Caco-2 (cell line): ENCODE measurements at regions of chr7 and their contacts with region 1.

Region 1: GRCh38 chr7:84025332-84025927 is 169.2 kb downstream of the SEMA3A start:
- DNase-seq: peak; percentile 75 to 86
- H3K4me3 ChIP-seq: no peak overlapping the region
- H3K4me3 Mint-ChIP-seq: no peak overlapping the region
- H3K27ac Mint-ChIP-seq: peak overlapping the region; percentile 84
- H3K4me1 ChIP-seq: peaks cover 70% of the 10 kb centered on the region
- H3K4me1 Mint-ChIP-seq: peaks cover 31% of the 10 kb centered on the region
- H3K27me3 ChIP-seq: no peaks in the 10 kb centered on the region
- H3K27me3 Mint-ChIP-seq: no peaks in the 10 kb centered on the region
- CTCF ChIP-seq: no peak

Region 2: GRCh38 chr7:83934118-83934734 is 91.2 kb before region 1 on chr7:
- CTCF ChIA-PET with region 1: no interaction called
- POLR2A ChIA-PET with region 1: no interaction called
- intact Hi-C with region 1: no loop called
- DNase-seq: no peak
- H3K4me3 ChIP-seq: no peak overlapping the region
- H3K4me3 Mint-ChIP-seq: no peak overlapping the region
- H3K27ac Mint-ChIP-seq: no peak overlapping the region
- H3K4me1 ChIP-seq: 0 out of 2 replicates have a peak, but pooled peaks cover 4% of the 10 kb centered on the region
- H3K4me1 Mint-ChIP-seq: peaks cover 10% of the 10 kb centered on the region
- H3K27me3 ChIP-seq: no peaks in the 10 kb centered on the region
- H3K27me3 Mint-ChIP-seq: no peaks in the 10 kb centered on the region
- CTCF ChIP-seq: no peak

Region 3: DNA sequence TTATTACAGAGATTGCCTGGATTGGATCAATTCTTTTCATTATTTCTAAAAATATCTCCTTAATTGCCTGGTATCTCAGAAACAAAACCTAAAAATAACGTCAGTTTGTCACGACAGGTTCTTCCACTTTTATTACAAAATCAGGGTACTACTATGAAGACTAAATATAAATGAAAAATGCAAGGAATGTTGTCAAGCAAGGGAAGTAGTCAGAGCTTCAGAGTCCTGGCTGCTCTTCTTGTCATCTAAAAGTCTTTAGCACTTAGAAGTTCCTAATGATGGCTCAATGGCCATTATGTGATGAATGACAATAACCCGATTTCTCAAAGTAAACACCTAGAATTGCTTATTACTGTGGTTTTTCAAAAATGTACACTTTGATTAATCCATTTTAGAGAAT is 23.1 kb before region 1 on chr7:
- CTCF ChIA-PET with region 1: no interaction called
- POLR2A ChIA-PET with region 1: no interaction called
- intact Hi-C with region 1: loop called (anchors 1 kb)
- DNase-seq: peak in 1 of 2 experiments; percentile 24
- H3K4me3 ChIP-seq: no peak overlapping the region
- H3K4me3 Mint-ChIP-seq: no peak overlapping the region
- H3K27ac Mint-ChIP-seq: no peak overlapping the region
- H3K4me1 ChIP-seq: peaks cover 18% of the 10 kb centered on the region
- H3K4me1 Mint-ChIP-seq: peaks cover 6% of the 10 kb centered on the region
- H3K27me3 ChIP-seq: no peaks in the 10 kb centered on the region
- H3K27me3 Mint-ChIP-seq: no peaks in the 10 kb centered on the region
- CTCF ChIP-seq: no peak

Region 4: GRCh38 chr7:84073186-84073875 is 47.9 kb after region 1 on chr7:
- CTCF ChIA-PET with region 1: no interaction called
- POLR2A ChIA-PET with region 1: no interaction called
- intact Hi-C with region 1: loop called (anchors 1 kb)
- DNase-seq: peak in 1 of 2 experiments; percentile 38
- H3K4me3 ChIP-seq: no peak overlapping the region
- H3K4me3 Mint-ChIP-seq: no peak overlapping the region
- H3K27ac Mint-ChIP-seq: peak overlapping the region; percentile 25
- H3K4me1 ChIP-seq: peaks cover 45% of the 10 kb centered on the region
- H3K4me1 Mint-ChIP-seq: peaks cover 23% of the 10 kb centered on the region
- H3K27me3 ChIP-seq: no peaks in the 10 kb centered on the region
- H3K27me3 Mint-ChIP-seq: no peaks in the 10 kb centered on the region
- CTCF ChIP-seq: no peak

Region 5: GRCh38 chr7:84142726-84143125 is 117.3 kb after region 1 on chr7:
- CTCF ChIA-PET with region 1: no interaction called
- POLR2A ChIA-PET with region 1: no interaction called
- intact Hi-C with region 1: loop called (anchors 1 kb)
- DNase-seq: no peak
- H3K4me3 ChIP-seq: no peak overlapping the region
- H3K4me3 Mint-ChIP-seq: peak overlapping the region; percentile 20
- H3K27ac Mint-ChIP-seq: peak overlapping the region; percentile 34
- H3K4me1 ChIP-seq: peaks cover 62% of the 10 kb centered on the region
- H3K4me1 Mint-ChIP-seq: peaks cover 50% of the 10 kb centered on the region
- H3K27me3 ChIP-seq: no peaks in the 10 kb centered on the region
- H3K27me3 Mint-ChIP-seq: no peaks in the 10 kb centered on the region
- CTCF ChIP-seq: no peak

Region 6: GRCh38 chr7:84188786-84189405 is 163.5 kb after region 1 on chr7:
- CTCF ChIA-PET with region 1: no interaction called
- POLR2A ChIA-PET with region 1: no interaction called
- intact Hi-C with region 1: loop called (anchors 2 kb)
- DNase-seq: peak in 1 of 2 experiments; percentile 13
- H3K4me3 ChIP-seq: no peak overlapping the region
- H3K4me3 Mint-ChIP-seq: no peak overlapping the region
- H3K27ac Mint-ChIP-seq: no peak overlapping the region
- H3K4me1 ChIP-seq: peaks cover 35% of the 10 kb centered on the region
- H3K4me1 Mint-ChIP-seq: peaks cover 29% of the 10 kb centered on the region
- H3K27me3 ChIP-seq: no peaks in the 10 kb centered on the region
- H3K27me3 Mint-ChIP-seq: no peaks in the 10 kb centered on the region
- CTCF ChIP-seq: peak; percentile 54 to 56

Region 7: GRCh38 chr7:84879570-84880325 is 854.3 kb after region 1 on chr7:
- CTCF ChIA-PET with region 1: no interaction called
- POLR2A ChIA-PET with region 1: no interaction called
- intact Hi-C with region 1: no loop called
- DNase-seq: no peak
- H3K4me3 ChIP-seq: no peak overlapping the region
- H3K4me3 Mint-ChIP-seq: no peak overlapping the region
- H3K27ac Mint-ChIP-seq: no peak overlapping the region
- H3K4me1 ChIP-seq: no peaks in the 10 kb centered on the region
- H3K4me1 Mint-ChIP-seq: no peaks in the 10 kb centered on the region
- H3K27me3 ChIP-seq: no peaks in the 10 kb centered on the region
- H3K27me3 Mint-ChIP-seq: no peaks in the 10 kb centered on the region
- CTCF ChIP-seq: no peak